Pancreas (tissue), 10 donors: ENCODE measurements at regions of chr17 and their contacts with region 1.

Region 1: GRCh38 chr17:75589012-75589918 is 1.7 kb downstream of the MYO15B start:
- DNase-seq: peak; percentile 94 to 100 (median 97)
- ATAC-seq: peak; percentile 91 to 94 (median 94)
- H3K4me3 ChIP-seq: peak overlapping the region; percentile 30 to 65 (median 55)
- H3K27ac ChIP-seq: peak overlapping the region; percentile 76 to 88 (median 83)
- H3K4me1 ChIP-seq: peaks cover 0 to 5% (median 4%) of the 10 kb centered on the region in 3 donors
- H3K27me3 ChIP-seq: no peaks in the 10 kb centered on the region
- CTCF ChIP-seq: peak; percentile 41 to 69 (median 66)

Region 2: GRCh38 chr17:75524953-75525719 is 64.1 kb before region 1 on chr17 and contains the start of gene LLGL2:
- intact Hi-C with region 1: loop called in 2 of 3 experiments (anchors 5 to 10 kb)
- DNase-seq: peak; percentile 86 to 96 (median 94)
- ATAC-seq: peak; percentile 85 to 93 (median 89)
- H3K4me3 ChIP-seq: peak within 1 kb of the TSS; percentile 41 to 85 (median 66)
- H3K27ac ChIP-seq: peak within 1 kb of the TSS; percentile 88 to 89 (median 88)
- H3K4me1 ChIP-seq: peaks cover 7 to 11% (median 8%) of the 10 kb centered on the region in 3 donors
- H3K27me3 ChIP-seq: no peaks in the 10 kb centered on the region
- CTCF ChIP-seq: peak; percentile 11 to 24 (median 16)
- total RNA-seq, gene LLGL2: 87.8 to 130 (median 101) TPM

Region 3: GRCh38 chr17:75535119-75535537 is 54.1 kb before region 1 on chr17:
- intact Hi-C with region 1: loop called in 1 of 3 experiments (anchors 10 kb)
- DNase-seq: peak in 1 of 6 donors; percentile 59
- ATAC-seq: peak in 3 of 4 donors; percentile 4 to 16 (median 10)
- H3K4me3 ChIP-seq: no peak overlapping the region
- H3K27ac ChIP-seq: peak overlapping the region in 3 of 4 donors; percentile 7 to 41 (median 9)
- H3K4me1 ChIP-seq: peaks cover 27 to 36% (median 35%) of the 10 kb centered on the region in 3 donors
- H3K27me3 ChIP-seq: no peaks in the 10 kb centered on the region
- CTCF ChIP-seq: no peak